PC-9 (cell line): ENCODE measurements at regions of chr3 and their contacts with region 1.

Region 1: DNA sequence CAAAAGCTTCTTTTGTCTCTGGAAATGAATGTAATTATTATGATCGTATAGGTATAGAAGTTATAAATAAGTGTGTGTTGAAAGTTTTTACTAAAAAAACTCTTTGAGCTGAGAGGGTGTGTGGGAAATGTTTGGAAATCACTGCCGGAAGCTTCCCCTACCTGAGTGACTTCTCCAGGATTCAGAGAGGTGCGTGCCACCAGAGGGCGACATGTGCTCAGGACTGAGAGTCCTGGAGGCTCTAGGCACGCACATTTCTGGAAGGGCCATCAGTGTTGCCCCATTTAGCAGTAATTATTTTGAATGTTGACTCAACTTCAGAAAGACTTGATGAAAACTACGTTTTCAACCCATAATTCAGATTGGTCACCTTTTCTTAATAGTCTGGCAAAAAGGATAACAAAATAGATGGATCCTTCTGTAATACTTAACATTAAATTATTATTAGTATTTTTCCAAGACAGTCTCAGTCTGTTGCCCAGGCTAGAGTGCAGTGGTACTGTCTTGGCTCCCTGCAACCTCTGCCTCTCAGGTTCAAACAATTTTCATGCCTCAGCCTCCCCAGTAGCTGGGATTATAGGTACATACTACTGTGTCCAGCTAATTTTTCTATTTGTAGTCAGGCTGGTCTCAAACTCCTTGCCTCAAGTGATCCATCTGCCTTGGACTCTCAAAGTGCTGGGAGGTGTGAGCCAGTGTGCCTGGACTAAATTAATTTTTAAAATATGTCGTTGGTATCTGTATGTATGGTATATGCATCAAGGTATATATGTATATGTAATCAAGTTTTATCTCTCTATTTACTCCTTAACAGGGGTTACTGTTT is 34.5 kb downstream of the GPR171 start:
- DNase-seq: peak; percentile 53 to 73
- H3K4me3 ChIP-seq: no peak overlapping the region
- H3K27ac ChIP-seq: no peak overlapping the region
- H3K4me1 ChIP-seq: no peaks in the 10 kb centered on the region
- H3K27me3 ChIP-seq: no peaks in the 10 kb centered on the region
- CTCF ChIP-seq: peak; percentile 92

Region 2: DNA sequence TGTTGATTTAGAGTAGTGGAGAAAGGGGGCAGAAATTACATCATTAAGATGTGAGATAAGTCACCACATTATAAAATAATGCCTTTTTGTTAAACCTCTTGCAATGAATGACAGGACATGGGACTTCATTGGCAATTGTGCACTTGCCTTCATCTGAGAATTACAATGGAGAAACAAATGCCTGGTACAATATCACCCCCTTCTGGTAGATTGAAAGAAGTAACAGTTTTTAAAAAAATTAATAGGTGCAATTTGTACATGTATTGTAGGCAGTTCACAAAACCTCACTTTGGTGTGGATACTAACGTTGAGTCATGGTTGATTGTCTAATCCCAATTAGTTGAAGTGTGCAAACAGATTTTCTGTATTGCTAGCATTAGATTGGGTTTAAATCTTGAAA is 114.4 kb after region 1 on chr3:
- CTCF ChIA-PET with region 1: interaction called, 3 read pairs
- POLR2A ChIA-PET with region 1: no interaction called
- intact Hi-C with region 1: loop called (anchors 1 kb)
- DNase-seq: peak in 1 of 2 experiments; percentile 54
- H3K4me3 ChIP-seq: no peak overlapping the region
- H3K27ac ChIP-seq: no peak overlapping the region
- H3K4me1 ChIP-seq: peaks cover 8% of the 10 kb centered on the region
- H3K27me3 ChIP-seq: no peaks in the 10 kb centered on the region
- CTCF ChIP-seq: peak; percentile 91

Region 3: GRCh38 chr3:151372063-151372820 is 203.8 kb after region 1 on chr3:
- CTCF ChIA-PET with region 1: no interaction called
- POLR2A ChIA-PET with region 1: no interaction called
- intact Hi-C with region 1: no loop called
- DNase-seq: no peak
- H3K4me3 ChIP-seq: no peak overlapping the region
- H3K27ac ChIP-seq: no peak overlapping the region
- H3K4me1 ChIP-seq: no peaks in the 10 kb centered on the region
- H3K27me3 ChIP-seq: no peaks in the 10 kb centered on the region
- CTCF ChIP-seq: no peak

Region 4: DNA sequence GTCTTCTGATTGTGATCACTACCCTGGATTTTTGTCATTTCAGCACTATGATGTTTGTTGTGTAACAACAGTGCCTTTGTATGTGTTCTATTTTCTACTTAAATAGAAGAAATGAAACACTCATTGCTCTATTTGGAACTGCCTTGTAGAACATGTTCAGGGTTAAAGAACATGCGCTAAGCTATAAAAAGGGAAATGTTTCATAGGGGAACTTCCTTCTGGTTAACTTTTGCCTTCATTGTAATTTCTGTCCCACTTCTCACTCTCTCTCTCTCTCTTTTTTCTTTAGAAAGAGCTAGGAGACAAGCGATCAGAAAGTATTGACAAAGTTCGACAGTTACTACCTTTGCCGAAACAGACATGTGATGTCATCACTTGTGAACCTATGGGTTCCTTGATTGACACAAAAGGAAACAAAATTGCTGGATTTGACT is 216.3 kb after region 1 on chr3 and contains the start of gene P2RY12:
- CTCF ChIA-PET with region 1: no interaction called
- POLR2A ChIA-PET with region 1: no interaction called
- intact Hi-C with region 1: no loop called
- DNase-seq: no peak
- H3K4me3 ChIP-seq: no peak within 1 kb of the TSS
- H3K27ac ChIP-seq: no peak within 1 kb of the TSS
- H3K4me1 ChIP-seq: no peaks in the 10 kb centered on the region
- H3K27me3 ChIP-seq: no peaks in the 10 kb centered on the region
- CTCF ChIP-seq: no peak
- total RNA-seq, gene P2RY12: not detected in 2 replicates

Region 5: GRCh38 chr3:151439652-151440129 is 271.2 kb after region 1 on chr3:
- CTCF ChIA-PET with region 1: interaction called, 3 read pairs
- POLR2A ChIA-PET with region 1: no interaction called
- intact Hi-C with region 1: loop called (anchors 2 kb)
- DNase-seq: peak; percentile 40 to 55
- H3K4me3 ChIP-seq: no peak overlapping the region
- H3K27ac ChIP-seq: no peak overlapping the region
- H3K4me1 ChIP-seq: peaks cover under 1% of the 10 kb centered on the region; the same call in 1 of the 2 replicates
- H3K27me3 ChIP-seq: no peaks in the 10 kb centered on the region
- CTCF ChIP-seq: peak; percentile 91

Region 6: GRCh38 chr3:151896241-151897012 is 727.9 kb after region 1 on chr3:
- CTCF ChIA-PET with region 1: interaction called, 12 read pairs
- POLR2A ChIA-PET with region 1: no interaction called
- intact Hi-C with region 1: no loop called
- DNase-seq: peak; percentile 11 to 65
- H3K4me3 ChIP-seq: no peak overlapping the region
- H3K27ac ChIP-seq: no peak overlapping the region
- H3K4me1 ChIP-seq: peaks cover 2% of the 10 kb centered on the region
- H3K27me3 ChIP-seq: no peaks in the 10 kb centered on the region
- CTCF ChIP-seq: no peak

Region 7: GRCh38 chr3:152574461-152575079 is 1406.1 kb after region 1 on chr3:
- CTCF ChIA-PET with region 1: no interaction called
- POLR2A ChIA-PET with region 1: no interaction called
- intact Hi-C with region 1: loop called (anchors 5 kb)
- DNase-seq: peak in 1 of 2 experiments; percentile 46
- H3K4me3 ChIP-seq: no peak overlapping the region
- H3K27ac ChIP-seq: no peak overlapping the region
- H3K4me1 ChIP-seq: no peaks in the 10 kb centered on the region
- H3K27me3 ChIP-seq: no peaks in the 10 kb centered on the region
- CTCF ChIP-seq: peak; percentile 74